HEK293 (cell line): ENCODE measurements at regions of chr6 and their contacts with region 1.

Region 1: DNA sequence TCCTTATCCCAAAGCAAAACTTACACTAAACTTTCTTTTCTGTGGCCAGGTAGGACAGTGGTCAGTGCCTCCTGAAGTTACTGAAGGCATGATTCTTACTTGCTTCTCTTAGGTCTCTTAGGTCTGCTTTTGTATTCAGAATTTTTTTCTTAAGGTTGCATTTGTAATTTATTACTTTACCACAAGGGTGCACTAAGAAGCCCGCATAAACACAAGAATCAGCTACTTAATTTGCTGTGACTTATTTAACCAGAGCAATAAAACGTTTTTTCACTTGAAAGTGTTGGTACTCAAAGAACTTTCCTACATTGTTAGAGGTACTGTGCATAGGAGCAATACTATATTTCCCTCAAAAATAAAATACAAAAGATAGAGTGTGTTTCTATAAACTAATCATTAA is 75.4 kb upstream of the LAMA2 start:
- H3K4me3 ChIP-seq: no peak overlapping the region
- H3K27ac ChIP-seq: no peak overlapping the region
- H3K4me1 ChIP-seq: no peaks in the 10 kb centered on the region
- CTCF ChIP-seq: no peak

Region 2: GRCh38 chr6:128694303-128695009 is 113.1 kb before region 1 on chr6:
- CTCF ChIA-PET with region 1: no interaction called
- POLR2A ChIA-PET with region 1: no interaction called
- H3K4me3 ChIP-seq: no peak overlapping the region
- H3K27ac ChIP-seq: no peak overlapping the region
- H3K4me1 ChIP-seq: no peaks in the 10 kb centered on the region
- CTCF ChIP-seq: no peak

Region 3: DNA sequence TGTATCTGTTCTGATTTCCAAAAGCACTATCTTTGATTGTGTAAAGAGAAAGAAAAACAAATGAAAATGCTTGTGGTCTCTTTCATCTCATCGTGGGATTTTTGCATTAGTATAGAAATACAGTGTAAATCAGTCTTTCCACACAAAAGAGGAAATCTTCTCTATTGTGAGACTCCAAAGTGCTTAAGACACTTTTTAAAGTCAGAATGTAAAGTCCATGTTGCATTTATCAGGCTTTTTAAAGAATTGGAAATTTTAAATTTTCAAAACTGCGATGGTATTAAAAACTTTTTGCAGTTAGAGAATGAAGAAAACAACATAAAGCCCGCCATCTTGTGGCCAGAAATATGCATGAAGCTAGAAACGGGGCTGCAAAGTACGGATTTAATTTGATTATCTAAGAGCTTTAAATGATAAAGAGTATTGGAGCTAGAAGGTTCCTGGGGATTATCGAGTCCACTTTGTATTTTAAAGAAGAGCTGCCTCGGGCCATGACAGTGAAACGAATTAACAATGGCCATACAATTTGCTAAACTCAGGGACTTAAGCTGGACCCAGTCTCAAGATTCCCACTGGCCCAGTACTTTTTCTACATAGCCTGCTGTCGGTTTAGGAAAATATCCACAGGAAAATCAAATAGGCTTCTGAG is 562.8 kb after region 1 on chr6:
- CTCF ChIA-PET with region 1: interaction called, 12 read pairs
- POLR2A ChIA-PET with region 1: no interaction called
- H3K4me3 ChIP-seq: peak overlapping the region; percentile 20; the same call in 1 of the 2 replicates
- H3K27ac ChIP-seq: no peak overlapping the region
- H3K4me1 ChIP-seq: no peaks in the 10 kb centered on the region; the same call in 1 of the 2 replicates
- CTCF ChIP-seq: 0 out of 2 replicates have a peak, but pooled peaks have one; percentile 36